Colonic mucosa (tissue), 4 donors: ENCODE measurements at regions of chr20 and their contacts with region 1.

Region 1: GRCh38 chr20:21235484-21236445 is 67.4 kb upstream of the XRN2 start:
- DNase-seq: peak; percentile 68
- H3K4me3 ChIP-seq: no peak overlapping the region
- H3K27ac ChIP-seq: no peak overlapping the region
- H3K4me1 ChIP-seq: no peaks in the 10 kb centered on the region
- H3K27me3 ChIP-seq: no peaks in the 10 kb centered on the region
- CTCF ChIP-seq: peak; percentile 78

Region 2: DNA sequence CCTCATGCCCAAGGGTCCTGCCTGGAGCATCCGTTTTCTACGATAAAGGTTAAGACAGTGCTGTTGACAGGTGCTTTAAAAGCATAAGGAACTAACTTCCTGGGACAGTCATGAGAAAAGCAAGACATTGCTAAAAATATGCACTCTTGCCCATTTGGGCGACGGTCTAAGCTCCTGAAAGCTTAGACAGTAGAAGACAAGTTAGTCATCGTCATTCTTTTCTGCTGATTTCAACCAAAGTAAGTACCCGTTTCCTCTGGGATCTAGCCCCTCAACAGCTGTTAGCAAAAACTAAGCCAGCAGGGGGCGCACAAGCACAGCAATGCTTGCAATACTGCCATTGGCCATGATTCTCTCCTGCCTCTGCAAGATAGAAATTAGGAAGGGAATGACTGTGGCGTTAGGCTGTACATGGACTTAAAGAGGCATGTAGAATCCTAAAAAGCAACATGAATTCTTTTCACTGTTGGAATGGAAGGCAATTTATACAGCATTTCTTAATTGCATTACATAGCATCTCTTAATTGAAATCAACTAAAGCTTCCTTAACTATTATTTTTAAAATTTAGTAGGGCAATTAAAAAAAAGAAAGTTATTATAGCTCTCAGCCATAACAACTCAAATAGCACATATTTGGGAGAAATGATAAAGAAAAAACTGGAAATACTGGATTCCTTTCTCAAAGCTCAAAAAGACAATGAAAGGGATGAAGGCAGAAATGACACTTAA is 375.5 kb before region 1 on chr20:
- intact Hi-C with region 1: loop called (anchors 5 kb)
- DNase-seq: peak; percentile 90
- H3K4me3 ChIP-seq: no peak overlapping the region
- H3K27ac ChIP-seq: no peak overlapping the region
- H3K4me1 ChIP-seq: no peaks in the 10 kb centered on the region
- H3K27me3 ChIP-seq: no peaks in the 10 kb centered on the region
- CTCF ChIP-seq: peak; percentile 97

Region 3: GRCh38 chr20:21016751-21017150 is 219.0 kb before region 1 on chr20:
- intact Hi-C with region 1: no loop called
- DNase-seq: no peak
- H3K4me3 ChIP-seq: no peak overlapping the region
- H3K27ac ChIP-seq: no peak overlapping the region
- H3K4me1 ChIP-seq: no peaks in the 10 kb centered on the region
- H3K27me3 ChIP-seq: peaks cover 5% of the 10 kb centered on the region
- CTCF ChIP-seq: no peak

Region 4: DNA sequence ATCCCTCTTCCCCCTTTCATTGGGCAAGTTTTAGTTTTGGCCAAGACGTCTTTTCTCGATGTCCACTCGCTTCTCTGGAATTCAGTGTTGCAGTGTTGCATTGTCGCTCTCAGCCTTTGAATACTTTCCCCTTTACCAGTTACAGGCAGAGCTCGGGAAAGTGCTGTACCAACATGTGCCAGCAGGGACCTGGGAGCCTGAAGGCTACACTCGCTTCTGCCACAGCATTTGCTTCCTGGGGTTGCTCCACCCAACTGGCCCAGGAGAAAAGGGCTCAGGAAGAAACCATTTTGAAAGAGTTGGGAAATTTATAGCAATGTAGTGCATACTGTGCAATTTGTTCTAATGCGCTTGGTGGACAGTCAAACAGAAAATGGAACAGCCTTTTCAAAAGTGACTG is 208.2 kb before region 1 on chr20:
- intact Hi-C with region 1: no loop called
- DNase-seq: no peak
- H3K4me3 ChIP-seq: no peak overlapping the region
- H3K27ac ChIP-seq: no peak overlapping the region
- H3K4me1 ChIP-seq: no peaks in the 10 kb centered on the region
- H3K27me3 ChIP-seq: no peaks in the 10 kb centered on the region
- CTCF ChIP-seq: no peak

Region 5: GRCh38 chr20:21202284-21202683 is 33.5 kb before region 1 on chr20:
- intact Hi-C with region 1: no loop called
- DNase-seq: no peak
- H3K4me3 ChIP-seq: no peak overlapping the region
- H3K27ac ChIP-seq: no peak overlapping the region
- H3K4me1 ChIP-seq: no peaks in the 10 kb centered on the region
- H3K27me3 ChIP-seq: no peaks in the 10 kb centered on the region
- CTCF ChIP-seq: no peak

Region 6: DNA sequence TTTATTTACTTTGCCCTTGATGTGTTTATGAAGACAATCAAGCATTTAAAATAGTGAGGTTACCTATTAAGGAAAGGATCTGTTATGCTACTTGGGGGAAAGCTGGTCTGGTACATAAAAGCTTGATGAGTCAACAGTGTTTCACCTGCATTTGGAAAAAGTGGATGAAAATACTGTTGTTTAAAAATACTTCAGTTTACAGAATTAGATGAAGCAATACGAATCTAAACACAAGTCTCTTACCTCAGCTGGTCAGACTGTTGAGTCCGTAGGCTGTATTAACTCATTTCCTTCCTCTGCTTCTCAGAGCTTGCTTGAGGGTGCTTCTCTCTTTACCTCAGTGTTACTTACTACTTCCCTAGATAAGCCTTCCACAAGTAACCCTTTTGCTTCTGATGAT is 125.5 kb after region 1 on chr20:
- intact Hi-C with region 1: no loop called
- DNase-seq: no peak
- H3K4me3 ChIP-seq: no peak overlapping the region
- H3K27ac ChIP-seq: no peak overlapping the region
- H3K4me1 ChIP-seq: no peaks in the 10 kb centered on the region
- H3K27me3 ChIP-seq: no peaks in the 10 kb centered on the region
- CTCF ChIP-seq: no peak